OCI-LY7 (cell line): ENCODE measurements at regions of chr1 and their contacts with region 1.

Region 1: GRCh38 chr1:54199765-54200518 is at the starts of genes CYB5RL and MRPL37:
- DNase-seq: peak; percentile 97
- H3K4me3 ChIP-seq: peak within 1 kb of the TSS; percentile 87
- H3K27ac ChIP-seq: peak within 1 kb of the TSS; percentile 41
- H3K4me1 ChIP-seq: peaks cover 28% of the 10 kb centered on the region
- CTCF ChIP-seq: no peak
- total RNA-seq, gene CYB5RL: 10.1 and 10.4 TPM in 2 replicates
- total RNA-seq, gene MRPL37: 85.6 and 107 TPM in 2 replicates

Region 2: GRCh38 chr1:54273092-54273794 is 73.3 kb after region 1 on chr1:
- CTCF ChIA-PET with region 1: no interaction called
- POLR2A ChIA-PET with region 1: no interaction called
- intact Hi-C with region 1: loop called (anchors 5 kb)
- DNase-seq: peak; percentile 96
- H3K4me3 ChIP-seq: peak overlapping the region; percentile 35
- H3K27ac ChIP-seq: peak overlapping the region; percentile 18
- H3K4me1 ChIP-seq: peaks cover 17% of the 10 kb centered on the region
- CTCF ChIP-seq: peak; percentile 83; the same call in 1 of the 2 replicates

Region 3: DNA sequence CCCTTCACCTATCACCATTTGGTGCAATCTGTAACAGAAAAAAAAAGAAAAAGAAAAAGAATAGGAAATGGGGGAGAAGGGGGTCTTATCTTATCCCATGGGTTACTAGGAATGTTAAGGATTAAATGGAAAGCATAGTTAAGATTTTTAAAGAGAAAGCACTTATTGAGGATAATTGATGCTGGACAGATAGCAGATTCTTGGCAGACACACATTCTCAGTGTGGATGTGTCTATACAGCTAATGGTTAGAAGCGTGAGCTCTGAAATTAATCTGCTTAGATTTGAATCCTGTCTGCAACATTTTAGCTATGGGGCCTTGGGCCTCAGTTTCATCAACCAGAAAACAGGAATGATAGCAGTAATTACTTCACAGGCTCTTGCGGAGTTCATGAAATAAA is 139.2 kb after region 1 on chr1:
- CTCF ChIA-PET with region 1: no interaction called
- POLR2A ChIA-PET with region 1: no interaction called
- intact Hi-C with region 1: no loop called
- DNase-seq: no peak
- H3K4me3 ChIP-seq: no peak overlapping the region
- H3K27ac ChIP-seq: no peak overlapping the region
- H3K4me1 ChIP-seq: peaks cover 11% of the 10 kb centered on the region
- CTCF ChIP-seq: no peak